WTC11 (cell line): ENCODE measurements at regions of chrX and their contacts with region 1.

Region 1: DNA sequence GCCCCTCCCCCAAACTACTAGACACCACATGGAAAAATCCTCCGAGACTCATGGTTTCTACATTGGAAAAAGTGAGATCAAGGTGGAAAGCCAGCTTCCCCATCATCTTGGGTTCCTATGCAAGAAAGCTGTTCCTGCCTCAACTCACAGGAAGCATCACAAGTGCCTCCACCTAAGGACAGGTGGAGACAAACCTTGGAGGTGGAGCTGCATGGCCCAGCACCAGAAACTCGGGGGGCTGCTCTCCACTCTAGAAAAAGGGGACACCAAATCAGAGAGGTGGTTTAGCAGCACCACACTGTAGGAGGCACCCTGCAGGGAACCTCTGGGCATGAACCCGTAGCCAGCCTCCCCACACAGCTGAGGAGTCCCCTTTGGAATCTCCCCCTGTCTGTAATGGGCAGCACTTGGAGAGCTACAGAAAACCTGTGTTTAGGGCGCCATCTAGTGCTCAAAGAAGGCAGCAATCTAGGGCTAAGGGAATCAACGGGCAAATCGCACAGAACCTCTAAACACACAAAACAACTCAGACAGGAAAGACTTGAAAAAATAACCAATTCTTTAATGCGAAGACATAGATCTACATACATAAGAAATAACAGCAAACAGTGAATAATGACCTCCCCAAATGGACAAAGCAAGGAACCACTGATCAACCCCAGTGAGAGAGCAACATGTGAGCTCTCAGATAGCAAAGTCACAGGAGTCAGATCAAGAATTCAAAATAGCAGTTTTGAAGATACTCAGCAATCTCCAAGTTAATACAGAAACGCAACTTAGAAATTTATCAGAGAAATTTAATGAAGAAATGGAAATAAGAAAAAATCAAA is 37.0 kb upstream of the ZBTB33 start:
- DNase-seq: peak; percentile 63
- ATAC-seq: peak; percentile 95
- H3K4me3 Mint-ChIP-seq: no peak overlapping the region
- H3K27ac Mint-ChIP-seq: no peak overlapping the region
- H3K4me1 Mint-ChIP-seq: peaks cover 5% of the 10 kb centered on the region; the same call in 1 of the 2 replicates
- H3K27me3 Mint-ChIP-seq: no peaks in the 10 kb centered on the region
- CTCF ChIP-seq: peak; percentile 38; the same call in 1 of the 2 replicates

Region 2: GRCh38 chrX:120200851-120201250 is 12.8 kb before region 1 on chrX:
- CTCF ChIA-PET with region 1: interaction called, 12 read pairs
- POLR2A ChIA-PET with region 1: no interaction called
- DNase-seq: no peak
- ATAC-seq: peak; percentile 56
- H3K4me3 Mint-ChIP-seq: no peak overlapping the region
- H3K27ac Mint-ChIP-seq: no peak overlapping the region
- H3K4me1 Mint-ChIP-seq: peaks cover 5% of the 10 kb centered on the region
- H3K27me3 Mint-ChIP-seq: no peaks in the 10 kb centered on the region
- CTCF ChIP-seq: no peak

Region 3: GRCh38 chrX:120228187-120228908 is 14.7 kb after region 1 on chrX:
- CTCF ChIA-PET with region 1: interaction called, 16 read pairs
- POLR2A ChIA-PET with region 1: no interaction called
- DNase-seq: no peak
- ATAC-seq: no peak; the same call in 1 of the 2 replicates
- H3K4me3 Mint-ChIP-seq: no peak overlapping the region
- H3K27ac Mint-ChIP-seq: peak overlapping the region; percentile 61; the same call in 1 of the 2 replicates
- H3K4me1 Mint-ChIP-seq: peaks cover 33% of the 10 kb centered on the region
- H3K27me3 Mint-ChIP-seq: no peaks in the 10 kb centered on the region
- CTCF ChIP-seq: no peak

Region 4: DNA sequence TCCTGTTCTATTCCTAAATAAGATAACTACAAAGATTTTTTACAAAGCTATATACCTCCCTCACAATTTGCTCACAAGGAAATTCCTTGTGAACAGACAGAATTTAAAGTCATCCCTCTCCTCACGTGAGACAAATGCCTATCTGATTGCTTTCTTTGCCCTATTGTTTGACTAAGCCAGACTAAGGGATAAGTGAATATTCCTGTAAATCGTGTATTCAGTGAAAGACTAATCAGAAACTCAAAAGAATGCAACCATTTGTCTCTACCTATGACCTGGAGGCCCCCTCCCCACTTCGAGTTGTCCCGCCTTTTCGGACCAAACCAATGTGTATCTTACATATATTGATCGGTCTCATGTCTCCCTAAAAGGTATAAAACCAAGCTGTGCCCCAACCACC is 21.6 kb after region 1 on chrX:
- CTCF ChIA-PET with region 1: interaction called, 11 read pairs
- POLR2A ChIA-PET with region 1: no interaction called
- DNase-seq: no peak
- ATAC-seq: peak; percentile 71
- H3K4me3 Mint-ChIP-seq: no peak overlapping the region
- H3K27ac Mint-ChIP-seq: peak overlapping the region; percentile 92
- H3K4me1 Mint-ChIP-seq: peaks cover 30% of the 10 kb centered on the region
- H3K27me3 Mint-ChIP-seq: no peaks in the 10 kb centered on the region
- CTCF ChIP-seq: no peak

Region 5: DNA sequence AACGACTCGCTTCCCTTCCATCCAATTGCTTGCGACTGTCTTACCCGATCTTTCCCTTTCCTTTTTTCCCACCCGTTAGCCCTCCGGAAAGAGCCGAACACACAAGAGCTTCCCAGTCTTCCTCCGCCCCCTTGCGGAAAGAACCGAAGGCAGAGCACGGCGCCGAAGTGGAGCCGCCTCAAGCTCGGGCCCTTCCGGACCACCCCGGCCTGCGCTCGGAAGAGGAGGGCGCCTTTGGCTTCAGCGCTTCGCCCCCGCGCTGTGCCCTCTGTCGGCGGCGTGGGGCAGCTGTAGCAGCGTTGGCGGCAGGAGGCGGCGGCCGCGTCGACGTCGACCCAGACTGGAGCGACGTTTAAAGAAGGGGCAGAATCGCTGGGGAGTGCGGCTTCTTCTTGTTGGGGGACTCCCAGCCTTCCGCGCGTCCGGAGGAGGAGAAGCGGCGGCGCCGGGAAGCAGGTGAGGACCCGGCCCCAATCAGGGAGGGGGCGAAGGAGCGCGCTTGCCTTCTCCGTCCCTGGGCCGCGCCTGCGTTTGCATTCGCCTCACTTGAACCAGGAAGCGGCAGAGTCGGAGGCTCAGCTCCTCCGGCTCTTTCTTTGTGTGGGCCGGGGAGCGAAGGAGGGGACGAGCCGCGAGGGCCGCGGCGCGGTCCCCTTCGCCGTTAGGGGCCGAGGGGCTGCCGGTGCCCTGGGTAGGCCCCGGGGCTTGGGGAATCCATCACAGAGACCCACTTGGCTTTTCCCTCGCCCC is 37.0 kb after region 1 on chrX and contains the start of gene ZBTB33:
- CTCF ChIA-PET with region 1: interaction called, 11 read pairs
- POLR2A ChIA-PET with region 1: no interaction called
- DNase-seq: peak; percentile 89
- ATAC-seq: peak; percentile 99
- H3K4me3 Mint-ChIP-seq: peak within 1 kb of the TSS; percentile 92
- H3K27ac Mint-ChIP-seq: peak within 1 kb of the TSS; percentile 72; the same call in 1 of the 2 replicates
- H3K4me1 Mint-ChIP-seq: peaks cover 7% of the 10 kb centered on the region
- H3K27me3 Mint-ChIP-seq: peaks cover 24% of the 10 kb centered on the region
- CTCF ChIP-seq: peak; percentile 36
- total RNA-seq, gene ZBTB33: 12.3 to 16.2 TPM (median 12.5 TPM) in 3 replicates